ENCODE measurements at regions of chr3 and their contacts with region 1.

Region 1: GRCh38 chr3:171491361-171491760 is 31.2 kb upstream of the TNIK start:
- DNase-seq: no peak
- H3K4me3 Mint-ChIP-seq: peak overlapping the region; percentile 66
- H3K27ac Mint-ChIP-seq: peak overlapping the region; percentile 82
- H3K4me1 Mint-ChIP-seq: peaks cover 46% of the 10 kb centered on the region
- H3K27me3 Mint-ChIP-seq: no peaks in the 10 kb centered on the region

Region 2: GRCh38 chr3:171480526-171480925 is 10.8 kb before region 1 on chr3:
- intact Hi-C with region 1: loop called (anchors 1 kb)
- DNase-seq: no peak
- H3K4me3 Mint-ChIP-seq: peak overlapping the region; percentile 31
- H3K27ac Mint-ChIP-seq: peak overlapping the region; percentile 75
- H3K4me1 Mint-ChIP-seq: peaks cover 16% of the 10 kb centered on the region
- H3K27me3 Mint-ChIP-seq: no peaks in the 10 kb centered on the region

Measured in activated T-helper 2 cell treated with anti-CD3 and anti-CD28 coated beads, Interferon-gamma antibody, Interleukin-2, Interleukin-4, amounts not matched to agents 10 μg/mL and 5 μg/mL and 100 μg/mL, durations not matched to agents 14 hours and 24 hours and 36 hours (primary cell).